Transverse colon (tissue), 4 donors: ENCODE measurements at regions of chr16 and their contacts with region 1.

Region 1: DNA sequence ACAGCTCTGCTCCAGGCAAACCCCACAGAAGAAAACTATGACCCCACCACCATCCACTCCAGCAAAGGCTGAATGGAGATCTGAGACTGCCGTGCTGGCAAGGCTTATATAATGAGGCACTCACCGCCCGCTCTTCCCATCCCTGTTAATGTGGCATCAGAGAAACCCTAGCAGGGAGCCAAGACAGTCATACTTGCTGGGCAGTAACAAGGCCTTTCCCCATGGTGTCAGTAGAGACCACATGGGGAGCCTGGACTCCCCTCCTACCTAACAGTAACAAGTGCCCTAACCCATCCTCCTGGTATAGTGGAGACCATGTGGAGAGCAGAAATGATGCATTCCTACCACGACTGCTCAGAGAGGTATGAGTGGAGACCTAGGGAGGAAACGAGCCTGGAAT is 235.2 kb downstream of the C16orf78 start:
- DNase-seq: no peak
- H3K4me3 ChIP-seq: no peak overlapping the region
- H3K27ac ChIP-seq: peak overlapping the region in 1 of 4 donors; percentile 24
- H3K4me1 ChIP-seq: peaks cover 0 to 14% (median 0%) of the 10 kb centered on the region in 4 donors
- H3K27me3 ChIP-seq: no peaks in the 10 kb centered on the region
- CTCF ChIP-seq: peak in 3 of 5 experiments; percentile 18 to 31 (median 20)
- EP300 ChIP-seq: no peak
- POLR2A ChIP-seq: no peak

Region 2: DNA sequence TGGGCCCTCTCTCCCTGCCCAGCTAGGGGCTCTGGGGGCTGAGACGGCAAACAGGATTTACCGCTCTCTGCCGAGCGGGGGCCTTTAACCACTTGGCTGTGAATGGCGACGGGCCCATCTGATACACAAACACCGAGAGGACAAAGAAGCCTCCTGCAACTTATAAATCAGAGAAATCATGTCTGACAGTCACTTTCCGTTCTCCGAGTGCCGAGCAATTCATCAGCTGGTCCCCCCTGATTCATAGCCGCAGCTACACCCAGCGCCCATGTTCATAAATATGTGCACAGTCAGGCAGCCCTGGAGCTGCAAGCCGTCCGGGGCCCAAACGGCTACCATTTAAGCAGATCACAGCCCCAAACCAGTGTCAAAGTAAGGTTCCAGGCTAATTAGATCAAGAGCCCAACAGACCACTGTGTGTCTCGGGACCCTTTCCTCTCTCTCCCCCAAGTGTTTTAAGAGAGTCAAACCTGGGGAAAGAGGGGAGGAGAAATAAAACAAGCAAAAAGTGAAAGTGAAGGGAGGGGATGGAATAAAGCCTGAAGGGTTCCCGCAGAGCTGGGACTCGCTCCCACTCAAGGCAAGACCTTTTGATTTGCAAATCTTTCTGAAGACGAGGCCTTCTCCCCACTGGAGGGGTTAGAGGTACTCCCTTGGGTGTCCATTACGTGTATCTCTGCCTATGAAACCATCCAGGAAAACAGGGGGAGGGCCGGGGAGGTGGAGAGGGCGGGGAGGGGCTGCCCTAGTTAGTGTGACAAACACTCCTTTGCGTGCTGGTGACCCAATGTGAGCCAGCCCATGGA is 80.5 kb before region 1 on chr16:
- in situ Hi-C with region 1: no loop called
- intact Hi-C with region 1: no loop called
- DNase-seq: no peak
- H3K4me3 ChIP-seq: peak overlapping the region in 3 of 4 donors; percentile 2 to 36 (median 11)
- H3K27ac ChIP-seq: peak overlapping the region in 1 of 4 donors; percentile 13
- H3K4me1 ChIP-seq: peaks cover 0 to 3% (median 0%) of the 10 kb centered on the region in 4 donors
- H3K27me3 ChIP-seq: no peaks in the 10 kb centered on the region
- CTCF ChIP-seq: no peak
- EP300 ChIP-seq: no peak
- POLR2A ChIP-seq: no peak

Region 3: DNA sequence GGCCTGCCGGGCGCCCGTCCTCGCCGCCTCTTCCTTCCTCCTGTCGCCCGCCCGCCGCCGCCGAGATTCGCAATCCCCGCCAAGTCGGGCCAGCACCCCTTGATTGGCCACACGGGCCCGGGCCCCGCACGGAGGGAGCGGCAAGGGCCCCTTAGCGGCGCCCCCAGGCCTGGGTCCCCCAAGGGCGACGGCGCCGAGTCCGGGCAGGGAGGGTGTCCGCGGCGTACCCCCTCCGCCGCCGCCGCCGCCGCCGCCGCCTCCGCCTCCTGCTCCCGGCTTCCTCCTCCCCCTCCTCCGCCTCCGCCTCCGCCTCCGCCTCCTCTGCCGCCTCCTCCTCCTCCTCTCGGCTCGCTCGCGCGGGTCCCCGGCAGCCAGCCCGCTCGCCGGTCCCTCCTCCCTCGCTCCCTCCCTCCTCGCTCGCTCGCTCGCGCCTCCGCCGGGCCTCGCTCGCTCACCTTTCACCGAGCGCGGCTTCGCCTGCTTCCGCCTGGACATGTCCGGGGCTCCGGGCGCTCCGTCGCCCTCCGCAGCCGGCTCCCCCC is 246.6 kb after region 1 on chr16:
- in situ Hi-C with region 1: loop called in 1 of 4 experiments (anchors 25 kb)
- intact Hi-C with region 1: no loop called
- DNase-seq: peak; percentile 93
- H3K4me3 ChIP-seq: peak overlapping the region; percentile 71 to 88 (median 78)
- H3K27ac ChIP-seq: peak overlapping the region; percentile 94 to 98 (median 96)
- H3K4me1 ChIP-seq: peaks cover 23 to 61% (median 53%) of the 10 kb centered on the region in 4 donors
- H3K27me3 ChIP-seq: no peaks in the 10 kb centered on the region
- CTCF ChIP-seq: no peak
- EP300 ChIP-seq: no peak
- POLR2A ChIP-seq: peak; percentile 82